ENCODE measurements at regions of chr13 and their contacts with region 1.

Region 1: GRCh38 chr13:26698392-26699196 is 62.0 kb downstream of the GPR12 start:
- DNase-seq: peak; percentile 78 to 98 (median 92)

Region 2: DNA sequence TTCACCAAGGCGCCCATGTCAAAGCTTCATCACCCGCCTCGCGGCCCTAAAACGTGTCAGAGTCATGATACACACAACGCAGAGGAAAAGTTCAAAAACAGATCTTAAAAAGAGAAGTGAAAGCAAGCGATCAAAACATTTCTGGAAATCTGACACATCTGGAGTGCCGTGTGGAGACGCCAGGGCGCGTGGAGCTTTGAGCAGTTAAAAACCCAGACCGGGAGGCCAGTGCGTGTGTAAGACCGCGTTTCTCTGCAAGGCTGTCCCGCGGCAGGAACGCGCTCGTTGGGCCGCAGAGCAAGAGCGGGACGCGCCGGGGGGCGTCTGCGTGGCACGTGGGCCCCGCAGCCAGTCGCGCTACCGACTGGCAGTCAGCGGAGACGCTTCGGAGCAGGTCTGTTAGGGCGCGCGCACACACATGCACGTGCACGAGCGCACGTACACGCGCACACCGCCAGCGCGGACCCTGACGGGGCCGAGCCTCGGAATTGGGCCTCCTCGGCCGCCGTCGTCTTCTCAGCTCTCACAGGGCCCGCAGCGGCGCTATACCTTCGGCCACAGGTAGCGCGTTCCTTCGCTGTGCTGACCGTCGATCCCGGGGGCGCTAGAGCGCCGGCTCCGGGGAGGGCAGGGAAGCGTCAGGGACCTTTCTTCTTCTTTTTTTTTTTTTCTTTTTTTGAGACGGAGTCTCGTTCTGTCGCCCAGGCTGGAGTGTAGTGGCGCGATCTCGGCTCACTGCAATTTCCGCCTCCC is 512.3 kb before region 1 on chr13:
- intact Hi-C with region 1: loop called (anchors 2 kb)
- DNase-seq: peak; percentile 66 to 98 (median 78)

Region 3: DNA sequence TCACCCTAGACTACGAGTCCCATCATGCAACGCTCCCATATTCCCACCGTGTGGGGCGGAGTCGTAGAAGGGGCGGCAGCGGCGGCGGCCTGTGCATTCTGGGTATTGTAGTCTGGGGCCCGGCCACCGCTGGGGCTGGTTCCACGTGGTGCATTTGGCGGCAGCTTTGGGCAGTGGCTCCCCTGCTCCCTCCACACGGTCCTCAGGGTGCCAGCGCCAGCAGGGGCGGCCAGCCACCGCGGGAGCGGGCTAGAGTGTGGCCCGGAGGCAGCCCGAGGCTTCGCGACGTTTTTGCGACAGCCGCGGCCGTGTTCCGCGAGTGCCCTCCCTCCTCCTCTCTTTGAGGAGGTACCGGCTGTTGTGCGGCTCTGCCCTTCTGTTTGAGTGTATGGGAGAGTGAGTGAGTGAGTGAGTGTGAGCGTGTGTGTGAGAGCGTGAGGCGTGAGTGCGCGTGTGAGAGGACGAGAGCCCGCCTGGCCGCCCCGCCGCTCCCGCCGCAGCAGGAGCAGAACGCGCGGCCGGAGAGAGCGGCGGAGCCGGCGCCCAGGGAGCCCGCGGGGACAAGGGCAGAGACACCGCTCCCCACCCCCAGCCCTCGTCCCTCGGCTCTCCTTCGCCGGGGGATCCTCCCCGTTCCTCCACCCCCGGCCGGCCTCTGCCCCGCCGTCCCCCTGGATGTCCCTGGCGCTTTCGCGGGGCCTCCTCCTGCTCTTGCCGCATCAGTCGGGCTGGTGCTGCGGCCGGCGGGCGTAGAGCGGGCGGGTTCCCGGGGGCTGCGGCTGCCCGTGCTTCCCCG is 444.6 kb before region 1 on chr13 and contains the start of gene CDK8:
- intact Hi-C with region 1: loop called (anchors 10 kb)
- DNase-seq: peak; percentile 84 to 98 (median 90)

Region 4: GRCh38 chr13:26482451-26483197 is 216.0 kb before region 1 on chr13:
- intact Hi-C with region 1: loop called (anchors 2 kb)
- DNase-seq: peak in 5 of 10 donors; percentile 40 to 59 (median 49)

Region 5: GRCh38 chr13:26656919-26657318 is 41.7 kb before region 1 on chr13:
- intact Hi-C with region 1: loop called (anchors 5 kb)
- DNase-seq: no peak

Region 6: GRCh38 chr13:26785838-26786630 is 87.4 kb after region 1 on chr13:
- intact Hi-C with region 1: no loop called
- DNase-seq: peak in 4 of 10 donors; percentile 25 to 88 (median 52)

Region 7: DNA sequence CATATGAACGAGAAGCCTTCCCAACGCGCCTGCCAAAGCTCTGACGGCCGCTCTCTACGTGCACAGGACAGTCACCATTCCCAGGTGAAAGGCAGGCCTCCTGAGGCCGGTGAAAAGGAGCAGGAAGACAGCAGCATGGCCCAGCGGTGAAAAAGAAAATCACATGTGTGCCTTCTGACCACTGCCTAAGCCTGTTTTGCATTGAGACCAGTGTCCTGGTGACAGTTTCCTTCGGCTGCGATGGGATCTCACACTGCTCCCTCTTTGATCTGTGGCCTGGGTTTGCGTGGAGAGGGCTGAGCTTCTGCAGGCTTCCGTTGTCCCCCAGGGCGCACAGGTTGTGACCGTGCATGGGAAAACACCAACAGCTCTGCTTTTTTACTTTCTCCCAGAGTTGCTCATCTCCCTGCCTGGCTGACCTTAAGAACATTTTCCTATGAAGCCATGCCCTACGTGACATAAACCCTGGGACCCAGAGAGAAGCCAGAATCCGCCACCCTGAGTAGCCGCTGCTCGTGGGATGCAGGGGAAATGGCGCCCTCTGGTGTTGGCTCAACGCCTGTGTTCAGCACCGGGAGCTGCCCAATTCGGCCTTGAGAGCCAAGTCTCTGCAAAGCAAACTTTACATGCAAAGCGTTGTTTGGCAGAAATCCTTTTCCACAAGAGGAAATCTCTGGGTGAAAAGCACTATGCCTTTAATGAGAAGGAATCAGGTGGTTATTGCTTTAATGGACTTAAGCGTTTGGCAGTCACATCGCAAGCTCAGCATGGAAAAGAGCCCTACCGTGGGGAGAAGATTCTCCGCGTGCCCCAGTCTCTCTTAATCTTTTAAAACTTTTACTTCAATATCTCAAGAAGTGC is 174.2 kb after region 1 on chr13:
- intact Hi-C with region 1: loop called (anchors 2 kb)
- DNase-seq: peak; percentile 27 to 96 (median 80)

Measured in posterior cingulate gyrus (tissue), 11 donors.